Dorsolateral prefrontal cortex (tissue), 120 donors: ENCODE measurements at regions of chr10 and their contacts with region 1.

Region 1: GRCh38 chr10:58781873-58782488 is 269.3 kb downstream of the BICC1 start:
- DNase-seq: no peak
- H3K4me3 ChIP-seq: peak overlapping the region in 1 of 59 donors; percentile 11
- H3K27ac ChIP-seq: peak overlapping the region in 9 of 59 donors; percentile 22 to 64 (median 33)
- H3K27me3 ChIP-seq: no peaks in the 10 kb centered on the region
- CTCF ChIP-seq: peak; percentile 44 to 91 (median 77)

Region 2: GRCh38 chr10:58721601-58722281 is 60.2 kb before region 1 on chr10:
- intact Hi-C with region 1: no loop called
- DNase-seq: no peak
- H3K4me3 ChIP-seq: no peak overlapping the region
- H3K27ac ChIP-seq: no peak overlapping the region
- H3K27me3 ChIP-seq: no peaks in the 10 kb centered on the region
- CTCF ChIP-seq: no peak

Region 3: DNA sequence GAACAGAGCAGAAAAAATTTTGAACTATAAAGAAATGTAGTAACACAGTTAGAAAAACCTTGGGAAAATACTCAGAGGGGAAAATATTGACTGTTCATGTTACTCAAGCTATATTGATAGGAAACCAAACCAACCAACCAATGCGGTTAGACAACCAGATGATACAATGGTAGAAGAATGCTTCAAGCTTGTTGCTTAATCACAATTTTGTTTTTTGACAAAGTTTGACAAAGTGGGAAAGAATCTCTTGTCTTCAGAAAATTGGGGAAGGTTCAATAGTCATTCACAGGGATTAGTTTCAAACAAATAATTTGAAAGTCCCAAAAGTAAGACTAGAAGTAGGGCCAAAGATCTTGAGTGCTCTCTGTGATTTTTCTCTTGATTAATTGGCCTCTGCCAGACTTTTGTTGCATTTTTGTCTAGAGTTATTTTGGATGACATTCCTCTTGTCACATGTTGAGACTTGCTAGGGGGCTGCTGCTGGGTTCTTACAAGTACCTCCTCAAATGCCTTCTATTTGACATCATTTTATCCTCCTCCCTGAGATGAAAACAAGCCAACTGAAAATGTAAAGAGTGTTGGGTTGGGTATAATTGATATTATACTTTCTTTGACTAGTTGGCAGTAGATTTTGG is 161.4 kb after region 1 on chr10:
- intact Hi-C with region 1: loop called (anchors 5 to 10 kb)
- DNase-seq: no peak
- H3K4me3 ChIP-seq: no peak overlapping the region
- H3K27ac ChIP-seq: peak overlapping the region in 25 of 59 donors; percentile 1 to 65 (median 41)
- H3K27me3 ChIP-seq: no peaks in the 10 kb centered on the region
- CTCF ChIP-seq: no peak

Region 4: DNA sequence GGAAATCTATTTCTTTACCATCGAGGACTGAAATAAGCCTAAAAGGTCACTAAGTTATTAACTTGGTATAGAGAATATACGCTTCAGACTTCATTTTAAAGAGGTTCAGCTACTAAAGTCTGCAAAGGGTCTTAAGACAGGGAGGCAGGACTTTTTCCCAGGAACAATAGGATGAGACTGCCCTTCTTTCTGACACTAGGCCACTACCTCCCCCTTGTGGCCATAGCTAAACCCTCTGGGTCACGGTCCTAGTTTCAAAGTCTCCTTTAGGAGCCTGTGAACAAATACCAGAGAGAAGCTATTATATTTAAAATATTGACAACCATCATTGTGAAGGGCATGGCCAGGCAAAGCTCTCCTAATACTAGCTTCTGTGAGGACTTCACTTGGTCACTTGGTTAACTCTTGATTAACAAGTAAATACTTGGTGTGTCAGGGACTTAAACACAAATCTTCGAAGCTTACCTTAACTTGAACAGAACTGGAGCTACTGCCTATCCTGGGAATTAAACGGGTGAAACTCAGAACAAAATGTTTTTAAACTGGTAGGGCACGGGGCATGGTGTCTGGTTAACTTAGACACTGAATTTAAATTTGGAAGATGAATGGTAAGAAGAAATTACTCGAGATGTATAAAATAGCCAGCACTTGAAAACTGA is 1048.7 kb after region 1 on chr10:
- intact Hi-C with region 1: loop called in 1 of 2 experiments (anchors 5 kb)
- DNase-seq: peak in 3 of 10 donors; percentile 35 to 55 (median 53)
- H3K4me3 ChIP-seq: no peak overlapping the region
- H3K27ac ChIP-seq: no peak overlapping the region
- H3K27me3 ChIP-seq: no peaks in the 10 kb centered on the region
- CTCF ChIP-seq: peak; percentile 40 to 86 (median 75)